ENCODE measurements at regions of chr15 and their contacts with region 1.

Region 1: DNA sequence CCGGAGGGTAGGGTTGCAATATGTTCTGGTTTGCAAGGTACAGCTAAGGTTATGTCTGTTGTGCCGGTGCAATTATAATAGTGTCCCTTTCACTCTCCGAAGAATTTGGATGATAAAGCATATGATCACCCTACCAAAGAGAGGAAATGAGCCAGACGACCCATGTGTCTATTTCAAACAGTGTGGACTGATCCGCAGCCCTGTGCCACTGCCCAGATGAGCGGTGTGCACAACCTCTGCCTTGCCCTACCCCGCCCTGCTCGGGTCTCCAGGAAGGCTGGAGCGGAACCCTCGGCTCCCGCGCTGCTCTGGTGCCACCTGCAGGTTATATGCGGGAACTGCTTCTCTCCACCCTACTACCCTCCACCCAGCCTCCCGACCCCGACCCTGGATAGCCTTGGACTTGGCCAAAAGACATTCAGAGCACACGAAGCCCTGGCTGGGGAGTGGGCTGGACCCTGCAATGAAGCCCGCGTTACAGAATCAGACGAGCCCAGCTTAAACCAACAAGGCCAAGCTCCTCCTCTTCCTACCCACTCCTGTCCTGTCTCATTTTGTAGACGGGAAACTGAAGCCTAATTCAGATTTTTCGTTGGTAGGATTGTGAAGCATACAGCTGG is 68.4 kb upstream of the CHRNB4 start:
- DNase-seq: peak in 1 of 2 experiments; percentile 67
- H3K4me3 ChIP-seq: no peak overlapping the region; the same call in 1 of the 2 replicates
- H3K27ac ChIP-seq: no peak overlapping the region
- H3K4me1 ChIP-seq: no peaks in the 10 kb centered on the region
- H3K27me3 ChIP-seq: peaks cover 18% of the 10 kb centered on the region
- CTCF ChIP-seq: peak; percentile 89

Region 2: GRCh38 chr15:78315686-78316282 is 393.6 kb before region 1 on chr15:
- CTCF ChIA-PET with region 1: no interaction called
- POLR2A ChIA-PET with region 1: no interaction called
- intact Hi-C with region 1: loop called (anchors 10 kb)
- DNase-seq: no peak
- H3K4me3 ChIP-seq: no peak overlapping the region
- H3K27ac ChIP-seq: no peak overlapping the region
- H3K4me1 ChIP-seq: no peaks in the 10 kb centered on the region
- H3K27me3 ChIP-seq: no peaks in the 10 kb centered on the region
- CTCF ChIP-seq: no peak; the same call in 1 of the 2 replicates

Region 3: GRCh38 chr15:78638658-78639314 is 70.6 kb before region 1 on chr15:
- CTCF ChIA-PET with region 1: no interaction called
- POLR2A ChIA-PET with region 1: no interaction called
- intact Hi-C with region 1: loop called (anchors 1 kb)
- DNase-seq: peak in 1 of 2 experiments; percentile 50
- H3K4me3 ChIP-seq: no peak overlapping the region
- H3K27ac ChIP-seq: no peak overlapping the region
- H3K4me1 ChIP-seq: no peaks in the 10 kb centered on the region
- H3K27me3 ChIP-seq: peaks cover 7% of the 10 kb centered on the region; the same call in 1 of the 2 replicates
- CTCF ChIP-seq: peak; percentile 78

Region 4: GRCh38 chr15:78732634-78733033 is 23.3 kb after region 1 on chr15:
- CTCF ChIA-PET with region 1: no interaction called
- POLR2A ChIA-PET with region 1: no interaction called
- intact Hi-C with region 1: no loop called
- DNase-seq: no peak
- H3K4me3 ChIP-seq: no peak overlapping the region
- H3K27ac ChIP-seq: no peak overlapping the region
- H3K4me1 ChIP-seq: no peaks in the 10 kb centered on the region
- H3K27me3 ChIP-seq: peaks cover 24% of the 10 kb centered on the region
- CTCF ChIP-seq: no peak

Region 5: GRCh38 chr15:79230766-79231165 is 521.4 kb after region 1 on chr15:
- CTCF ChIA-PET with region 1: no interaction called
- POLR2A ChIA-PET with region 1: no interaction called
- intact Hi-C with region 1: no loop called
- DNase-seq: no peak
- H3K4me3 ChIP-seq: no peak overlapping the region
- H3K27ac ChIP-seq: no peak overlapping the region
- H3K4me1 ChIP-seq: no peaks in the 10 kb centered on the region
- H3K27me3 ChIP-seq: peaks cover 30% of the 10 kb centered on the region
- CTCF ChIP-seq: no peak

Measured in PC-9 (cell line).